Mammary epithelial cell (primary cell): ENCODE measurements at regions of chr15 and their contacts with region 1.

Region 1: GRCh38 chr15:56245871-56246814 is 2.5 kb upstream of the RFX7 start:
- DNase-seq: peak; percentile 79
- H3K4me3 ChIP-seq: peak overlapping the region; percentile 27 to 43 (median 34)
- H3K27ac ChIP-seq: peak overlapping the region; percentile 19
- H3K4me1 ChIP-seq: peaks cover 17% of the 10 kb centered on the region
- H3K27me3 ChIP-seq: no peaks in the 10 kb centered on the region
- CTCF ChIP-seq: peak; percentile 100

Region 2: GRCh38 chr15:55649054-55649423 is 597.1 kb before region 1 on chr15:
- CTCF ChIA-PET with region 1: interaction called, 11 read pairs
- dilution Hi-C with region 1: no loop called
- in situ Hi-C with region 1: no loop called
- intact Hi-C with region 1: loop called (anchors 1 kb)
- DNase-seq: peak; percentile 44
- H3K4me3 ChIP-seq: no peak overlapping the region
- H3K27ac ChIP-seq: no peak overlapping the region
- H3K4me1 ChIP-seq: no peaks in the 10 kb centered on the region
- H3K27me3 ChIP-seq: no peaks in the 10 kb centered on the region
- CTCF ChIP-seq: no peak

Region 3: DNA sequence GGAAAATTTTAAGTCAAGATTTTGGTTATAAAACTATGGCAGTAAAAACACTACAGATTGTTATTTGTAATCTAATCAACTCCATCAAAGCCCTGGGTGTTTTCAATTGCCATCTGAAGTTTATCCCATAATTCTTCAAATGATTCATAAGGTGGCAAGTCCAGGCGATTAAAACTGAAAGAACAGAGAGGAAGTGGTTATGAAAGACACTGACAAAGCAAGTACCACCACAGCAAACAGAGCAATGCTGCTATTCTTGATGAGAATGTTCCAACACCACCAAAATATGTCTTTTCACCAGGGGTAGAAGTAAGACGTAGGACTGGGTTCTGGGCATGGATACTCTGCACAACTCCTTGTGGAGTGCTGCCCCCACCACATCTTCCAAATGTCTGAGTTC is 416.3 kb before region 1 on chr15:
- CTCF ChIA-PET with region 1: no interaction called
- dilution Hi-C with region 1: no loop called
- in situ Hi-C with region 1: no loop called
- intact Hi-C with region 1: no loop called
- DNase-seq: peak; percentile 78
- H3K4me3 ChIP-seq: no peak overlapping the region
- H3K27ac ChIP-seq: no peak overlapping the region
- H3K4me1 ChIP-seq: peaks cover 32% of the 10 kb centered on the region
- H3K27me3 ChIP-seq: no peaks in the 10 kb centered on the region
- CTCF ChIP-seq: no peak

Region 4: DNA sequence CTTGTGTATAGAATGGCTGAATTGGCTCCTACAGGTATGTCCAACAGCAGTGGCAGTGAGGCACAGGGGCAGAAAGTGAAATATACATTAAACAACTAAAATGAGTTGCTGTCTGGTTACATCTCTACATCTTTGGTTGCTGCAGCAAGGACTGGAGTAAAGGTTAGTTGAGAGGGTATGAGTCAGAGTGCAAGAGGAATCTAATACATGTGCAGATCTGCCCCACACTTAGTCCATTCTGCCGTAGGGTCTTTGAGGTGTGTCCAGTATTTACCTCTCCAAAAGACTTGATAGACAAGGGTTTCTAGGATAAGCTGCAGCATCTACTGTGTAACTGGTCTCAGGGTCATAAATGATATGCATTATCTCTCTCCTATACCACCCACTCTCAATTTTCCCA is 246.5 kb before region 1 on chr15:
- CTCF ChIA-PET with region 1: interaction called, 4 read pairs
- dilution Hi-C with region 1: no loop called
- in situ Hi-C with region 1: no loop called
- intact Hi-C with region 1: loop called (anchors 2 kb)
- DNase-seq: peak; percentile 78
- H3K4me3 ChIP-seq: no peak overlapping the region
- H3K27ac ChIP-seq: peak overlapping the region; percentile 6
- H3K4me1 ChIP-seq: peaks cover 47% of the 10 kb centered on the region
- H3K27me3 ChIP-seq: no peaks in the 10 kb centered on the region
- CTCF ChIP-seq: no peak

Region 5: GRCh38 chr15:56146756-56147155 is 99.4 kb before region 1 on chr15:
- CTCF ChIA-PET with region 1: interaction called, 3 read pairs
- dilution Hi-C with region 1: loop called (anchors 5 kb)
- in situ Hi-C with region 1: no loop called
- intact Hi-C with region 1: no loop called
- DNase-seq: no peak
- H3K4me3 ChIP-seq: no peak overlapping the region
- H3K27ac ChIP-seq: no peak overlapping the region
- H3K4me1 ChIP-seq: peaks cover 7% of the 10 kb centered on the region
- H3K27me3 ChIP-seq: no peaks in the 10 kb centered on the region
- CTCF ChIP-seq: no peak

Region 6: GRCh38 chr15:56211960-56212550 is 34.1 kb before region 1 on chr15:
- CTCF ChIA-PET with region 1: no interaction called
- dilution Hi-C with region 1: no loop called
- in situ Hi-C with region 1: no loop called
- intact Hi-C with region 1: no loop called
- DNase-seq: no peak
- H3K4me3 ChIP-seq: no peak overlapping the region
- H3K27ac ChIP-seq: no peak overlapping the region
- H3K4me1 ChIP-seq: no peaks in the 10 kb centered on the region
- H3K27me3 ChIP-seq: no peaks in the 10 kb centered on the region
- CTCF ChIP-seq: no peak

Region 7: DNA sequence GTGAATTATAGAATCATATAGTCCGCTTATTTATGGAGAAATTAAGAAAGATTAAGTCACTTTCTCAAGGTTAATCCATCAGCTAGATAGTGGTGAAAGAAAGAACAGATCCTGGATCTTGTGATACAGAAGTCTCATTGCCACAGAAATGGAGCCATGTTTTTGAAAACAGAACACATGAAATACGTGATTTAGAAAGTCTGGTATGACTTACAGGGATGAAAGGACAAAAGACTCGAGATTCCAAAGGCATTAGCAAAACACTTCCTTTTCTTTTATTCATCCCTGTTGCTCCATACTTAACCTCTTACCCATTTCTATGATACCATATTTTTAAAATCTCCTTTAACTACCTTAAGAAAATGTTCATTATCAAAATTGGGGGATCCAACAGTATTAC is 79.0 kb after region 1 on chr15:
- CTCF ChIA-PET with region 1: no interaction called
- dilution Hi-C with region 1: no loop called
- in situ Hi-C with region 1: no loop called
- intact Hi-C with region 1: loop called (anchors 5 kb)
- DNase-seq: peak; percentile 42
- H3K4me3 ChIP-seq: no peak overlapping the region
- H3K27ac ChIP-seq: no peak overlapping the region
- H3K4me1 ChIP-seq: peaks cover 24% of the 10 kb centered on the region
- H3K27me3 ChIP-seq: no peaks in the 10 kb centered on the region
- CTCF ChIP-seq: no peak

Region 8: GRCh38 chr15:56428821-56429458 is 182.8 kb after region 1 on chr15:
- CTCF ChIA-PET with region 1: interaction called, 5 read pairs
- dilution Hi-C with region 1: no loop called
- in situ Hi-C with region 1: loop called (anchors 10 kb)
- intact Hi-C with region 1: loop called (anchors 1 kb)
- DNase-seq: peak; percentile 20
- H3K4me3 ChIP-seq: no peak overlapping the region
- H3K27ac ChIP-seq: no peak overlapping the region
- H3K4me1 ChIP-seq: no peaks in the 10 kb centered on the region
- H3K27me3 ChIP-seq: no peaks in the 10 kb centered on the region
- CTCF ChIP-seq: peak; percentile 52 to 59